OCI-LY7 (cell line): ENCODE measurements at regions of chr18 and their contacts with region 1.

Region 1: DNA sequence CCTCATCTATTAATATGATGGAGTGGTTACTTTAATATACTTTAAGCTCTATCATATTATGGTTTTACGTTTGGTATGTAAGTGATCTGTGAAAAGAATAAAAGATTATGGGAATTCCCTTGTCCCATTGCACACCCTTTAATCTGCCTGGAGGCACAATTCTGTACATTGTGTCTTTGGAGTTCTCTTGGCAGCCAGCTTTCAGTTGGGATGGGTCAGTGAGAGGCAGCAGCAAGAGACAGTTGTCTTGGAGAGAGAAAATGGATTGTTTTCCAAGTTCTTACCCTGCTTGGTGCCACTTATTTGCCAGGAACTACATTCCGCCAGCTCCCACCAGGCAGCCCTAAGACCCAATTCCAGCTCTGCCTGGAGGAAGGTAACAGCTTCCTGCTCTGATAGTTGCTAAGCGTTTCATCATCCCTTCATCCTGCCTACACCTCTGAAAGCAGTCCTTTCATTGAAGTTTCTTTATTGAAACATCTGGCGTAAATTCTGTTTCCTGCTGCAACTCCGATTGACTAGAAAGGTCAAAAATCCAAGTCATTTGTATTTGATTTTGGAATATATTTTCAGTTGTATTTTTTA is 365.2 kb downstream of the AKAIN1 start:
- DNase-seq: no peak
- H3K4me3 ChIP-seq: no peak overlapping the region
- H3K27ac ChIP-seq: no peak overlapping the region
- H3K4me1 ChIP-seq: no peaks in the 10 kb centered on the region
- CTCF ChIP-seq: no peak

Region 2: GRCh38 chr18:4821801-4822200 is 10.1 kb before region 1 on chr18:
- CTCF ChIA-PET with region 1: no interaction called
- POLR2A ChIA-PET with region 1: interaction called, 10 read pairs
- intact Hi-C with region 1: no loop called
- DNase-seq: no peak
- H3K4me3 ChIP-seq: no peak overlapping the region
- H3K27ac ChIP-seq: no peak overlapping the region
- H3K4me1 ChIP-seq: no peaks in the 10 kb centered on the region
- CTCF ChIP-seq: no peak

Region 3: GRCh38 chr18:4878480-4878879 is 46.6 kb after region 1 on chr18:
- CTCF ChIA-PET with region 1: no interaction called
- POLR2A ChIA-PET with region 1: no interaction called
- intact Hi-C with region 1: no loop called
- DNase-seq: no peak
- H3K4me3 ChIP-seq: no peak overlapping the region
- H3K27ac ChIP-seq: no peak overlapping the region
- H3K4me1 ChIP-seq: no peaks in the 10 kb centered on the region
- CTCF ChIP-seq: 0 out of 2 replicates have a peak, but pooled peaks have one; percentile 28

Region 4: DNA sequence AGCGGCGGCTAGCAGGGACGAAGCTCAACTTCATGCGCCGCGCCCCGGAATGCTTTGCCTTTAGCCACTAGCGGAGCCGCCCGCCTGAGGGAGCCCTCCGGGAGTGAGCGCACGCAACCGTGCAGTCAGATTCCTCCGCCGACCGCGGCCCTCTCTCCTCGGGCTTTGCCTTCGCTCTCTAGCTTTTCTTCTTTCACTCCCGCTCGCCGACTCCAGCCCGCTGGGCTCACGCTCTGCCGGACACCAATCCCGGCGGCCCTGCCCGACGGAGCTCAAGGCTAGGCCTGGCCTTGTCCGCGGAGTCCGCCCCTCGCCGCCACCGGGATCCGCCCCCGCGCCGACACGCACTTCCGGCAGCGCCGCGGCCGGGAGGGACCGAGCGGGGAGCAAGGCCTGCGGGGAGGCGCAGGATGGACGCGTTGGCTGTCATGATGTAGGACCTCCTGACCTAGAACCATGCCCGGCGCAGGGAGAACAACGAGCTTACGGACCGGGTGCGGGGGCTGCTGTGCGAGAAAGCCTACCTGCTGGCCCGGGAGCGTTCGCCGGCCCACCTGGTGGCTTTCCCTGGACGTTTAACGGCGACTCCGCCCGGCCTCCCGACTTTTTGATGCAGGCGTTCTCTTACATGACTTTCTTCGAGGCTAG is 406.0 kb after region 1 on chr18:
- CTCF ChIA-PET with region 1: no interaction called
- POLR2A ChIA-PET with region 1: no interaction called
- intact Hi-C with region 1: no loop called
- DNase-seq: peak; percentile 89
- H3K4me3 ChIP-seq: peak overlapping the region; percentile 93
- H3K27ac ChIP-seq: peak overlapping the region; percentile 78
- H3K4me1 ChIP-seq: peaks cover 49% of the 10 kb centered on the region
- CTCF ChIP-seq: peak; percentile 40; the same call in 1 of the 2 replicates